ENCODE measurements at regions of chr5 and their contacts with region 1.

Region 1: GRCh38 chr5:54243473-54244080 is 66.8 kb downstream of the ARL15 start:
- DNase-seq: peak in 3 of 10 donors; percentile 13 to 25 (median 21)

Region 2: GRCh38 chr5:53643445-53643844 is 600.1 kb before region 1 on chr5:
- intact Hi-C with region 1: no loop called
- DNase-seq: no peak

Region 3: GRCh38 chr5:54310433-54311175 is 67.0 kb after region 1 on chr5 and contains the start of gene ARL15:
- intact Hi-C with region 1: loop called (anchors 10 kb)
- DNase-seq: peak; percentile 97 to 100 (median 99)

Region 4: DNA sequence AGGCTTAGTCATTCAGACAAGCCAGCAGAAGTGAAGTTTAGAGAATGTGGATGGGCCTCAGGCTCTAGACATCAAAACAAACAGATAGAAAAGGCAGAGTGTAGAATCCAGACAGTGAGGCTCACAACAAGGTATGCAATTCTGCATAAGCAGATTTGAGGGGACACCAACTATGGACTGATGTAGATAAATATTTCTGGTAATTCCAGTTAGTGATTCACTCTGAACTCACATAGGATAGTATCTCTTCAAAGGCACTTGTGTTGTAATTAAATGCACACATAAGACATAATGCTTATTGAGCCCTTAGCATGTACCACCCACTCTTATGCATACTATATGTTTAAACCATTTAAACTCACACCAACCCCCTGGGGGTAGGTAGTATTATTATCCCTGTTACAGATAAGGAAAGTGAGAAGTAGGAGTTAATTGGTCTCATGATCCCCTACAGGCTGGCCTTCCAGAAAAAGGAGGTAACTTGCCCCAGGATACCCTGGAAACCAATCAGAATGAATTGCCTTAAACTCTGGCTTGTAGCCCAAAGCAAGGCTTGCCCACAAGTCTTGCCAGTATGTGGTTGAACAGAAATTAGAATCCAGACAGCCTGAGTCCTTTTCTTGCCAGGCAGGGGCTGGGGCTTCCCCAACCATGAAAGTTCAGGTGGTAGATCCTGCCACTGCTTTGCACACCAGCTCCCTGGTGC is 172.5 kb after region 1 on chr5:
- intact Hi-C with region 1: loop called (anchors 5 kb)
- DNase-seq: no peak

Region 5: GRCh38 chr5:54443270-54443669 is 199.7 kb after region 1 on chr5:
- intact Hi-C with region 1: no loop called
- DNase-seq: no peak

Region 6: GRCh38 chr5:54480296-54480695 is 236.7 kb after region 1 on chr5:
- intact Hi-C with region 1: loop called (anchors 5 kb)
- DNase-seq: no peak

Region 7: GRCh38 chr5:54676481-54677340 is 433.1 kb after region 1 on chr5:
- intact Hi-C with region 1: no loop called
- DNase-seq: no peak

Measured in posterior cingulate gyrus (tissue), 11 donors.